Common myeloid progenitor, CD34-positive (primary cell): ENCODE measurements at regions of chr6 and their contacts with region 1.

Region 1: DNA sequence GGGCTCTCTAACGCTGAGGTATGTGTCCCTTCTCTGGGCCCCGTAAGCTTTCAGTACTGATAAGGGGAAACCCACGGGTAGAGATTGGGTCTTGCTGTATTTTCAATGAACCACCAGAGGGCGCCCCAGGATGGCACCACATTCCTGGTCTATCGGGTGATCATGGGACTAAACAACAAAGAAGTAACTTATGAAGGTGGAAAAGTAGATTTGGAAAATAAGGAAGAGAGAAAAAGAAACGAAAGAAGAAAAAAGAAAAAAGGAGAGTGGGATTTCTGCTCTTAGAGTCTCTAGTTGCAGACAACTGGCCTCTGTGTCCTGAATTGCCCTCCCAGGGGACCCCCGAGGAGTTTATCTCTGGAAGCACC is 93.8 kb downstream of the GMPR start:
- DNase-seq: peak; percentile 75 to 86 (median 82)
- H3K4me3 ChIP-seq: peak overlapping the region in 2 of 7 experiments; percentile 25 to 56
- H3K27ac ChIP-seq: no peak overlapping the region
- H3K4me1 ChIP-seq: peaks cover 2 to 13% (median 8%) of the 10 kb centered on the region in 4 experiments
- H3K27me3 ChIP-seq: no peaks in the 10 kb centered on the region

Region 2: GRCh38 chr6:16319813-16320532 is 12.2 kb before region 1 on chr6:
- CTCF ChIA-PET with region 1: interaction called, 46 read pairs
- POLR2A ChIA-PET with region 1: no interaction called
- DNase-seq: peak; percentile 76 to 95 (median 91)
- H3K4me3 ChIP-seq: peak overlapping the region in 6 of 7 experiments; percentile 31 to 74 (median 49)
- H3K27ac ChIP-seq: peak overlapping the region in 1 of 2 experiments; percentile 67
- H3K4me1 ChIP-seq: peaks cover 18 to 43% (median 35%) of the 10 kb centered on the region in 4 experiments
- H3K27me3 ChIP-seq: no peaks in the 10 kb centered on the region

Region 3: DNA sequence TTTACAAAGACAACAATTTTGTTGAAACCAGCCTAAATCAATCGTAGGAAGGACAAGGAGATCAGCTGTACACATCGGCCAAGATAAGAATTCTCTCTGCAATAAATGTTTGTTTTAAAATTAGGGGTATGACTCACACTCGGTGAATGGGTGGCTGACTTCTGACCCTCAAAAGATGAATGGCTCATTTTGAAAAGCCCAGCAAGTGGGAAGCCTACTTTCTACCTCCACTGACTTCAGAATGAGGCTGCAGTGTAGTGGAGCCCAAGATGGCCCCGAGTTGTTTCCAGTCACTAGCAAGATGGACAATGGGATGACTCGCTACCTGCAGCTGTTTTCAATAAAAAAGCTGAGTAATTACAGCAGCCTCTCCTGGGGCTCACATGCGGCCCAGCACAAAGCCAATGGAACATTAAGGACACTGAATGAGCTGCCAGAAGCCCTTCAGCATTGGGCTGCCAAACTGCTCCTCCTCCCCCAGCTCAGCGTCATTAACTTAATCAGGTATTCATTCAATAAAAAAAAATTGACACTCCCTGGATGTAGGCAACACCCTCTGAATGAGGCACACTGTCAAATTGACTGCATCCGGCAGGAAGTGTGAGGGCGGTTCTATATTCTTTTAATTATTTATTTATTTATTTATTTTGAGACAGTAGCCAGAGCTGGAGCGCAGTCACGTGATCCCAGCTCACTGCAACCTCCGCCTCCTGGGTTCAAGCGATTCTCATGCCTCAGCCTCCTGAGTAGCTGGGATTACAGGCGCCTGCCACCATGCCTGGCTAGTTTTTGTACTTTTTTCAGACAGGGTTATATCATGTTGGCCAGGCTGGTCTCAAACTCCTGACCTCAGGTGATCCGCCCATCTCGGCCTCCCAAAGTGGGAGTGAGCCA is 13.5 kb after region 1 on chr6:
- CTCF ChIA-PET with region 1: interaction called, 16 read pairs
- POLR2A ChIA-PET with region 1: no interaction called
- DNase-seq: no peak
- H3K4me3 ChIP-seq: no peak overlapping the region
- H3K27ac ChIP-seq: no peak overlapping the region
- H3K4me1 ChIP-seq: peaks cover 0 to 10% (median 4%) of the 10 kb centered on the region in 4 experiments
- H3K27me3 ChIP-seq: no peaks in the 10 kb centered on the region

Region 4: GRCh38 chr6:16403831-16404230 is 71.7 kb after region 1 on chr6:
- CTCF ChIA-PET with region 1: interaction called, 15 read pairs
- POLR2A ChIA-PET with region 1: no interaction called
- DNase-seq: no peak
- H3K4me3 ChIP-seq: no peak overlapping the region
- H3K27ac ChIP-seq: no peak overlapping the region
- H3K4me1 ChIP-seq: peaks cover 3 to 14% (median 6%) of the 10 kb centered on the region in 4 experiments
- H3K27me3 ChIP-seq: no peaks in the 10 kb centered on the region

Region 5: GRCh38 chr6:16409531-16410441 is 77.6 kb after region 1 on chr6:
- CTCF ChIA-PET with region 1: interaction called, 36 read pairs
- POLR2A ChIA-PET with region 1: no interaction called
- DNase-seq: peak; percentile 55 to 88 (median 86)
- H3K4me3 ChIP-seq: no peak overlapping the region
- H3K27ac ChIP-seq: no peak overlapping the region
- H3K4me1 ChIP-seq: peaks cover 0 to 12% (median 4%) of the 10 kb centered on the region in 4 experiments
- H3K27me3 ChIP-seq: no peaks in the 10 kb centered on the region

Region 6: DNA sequence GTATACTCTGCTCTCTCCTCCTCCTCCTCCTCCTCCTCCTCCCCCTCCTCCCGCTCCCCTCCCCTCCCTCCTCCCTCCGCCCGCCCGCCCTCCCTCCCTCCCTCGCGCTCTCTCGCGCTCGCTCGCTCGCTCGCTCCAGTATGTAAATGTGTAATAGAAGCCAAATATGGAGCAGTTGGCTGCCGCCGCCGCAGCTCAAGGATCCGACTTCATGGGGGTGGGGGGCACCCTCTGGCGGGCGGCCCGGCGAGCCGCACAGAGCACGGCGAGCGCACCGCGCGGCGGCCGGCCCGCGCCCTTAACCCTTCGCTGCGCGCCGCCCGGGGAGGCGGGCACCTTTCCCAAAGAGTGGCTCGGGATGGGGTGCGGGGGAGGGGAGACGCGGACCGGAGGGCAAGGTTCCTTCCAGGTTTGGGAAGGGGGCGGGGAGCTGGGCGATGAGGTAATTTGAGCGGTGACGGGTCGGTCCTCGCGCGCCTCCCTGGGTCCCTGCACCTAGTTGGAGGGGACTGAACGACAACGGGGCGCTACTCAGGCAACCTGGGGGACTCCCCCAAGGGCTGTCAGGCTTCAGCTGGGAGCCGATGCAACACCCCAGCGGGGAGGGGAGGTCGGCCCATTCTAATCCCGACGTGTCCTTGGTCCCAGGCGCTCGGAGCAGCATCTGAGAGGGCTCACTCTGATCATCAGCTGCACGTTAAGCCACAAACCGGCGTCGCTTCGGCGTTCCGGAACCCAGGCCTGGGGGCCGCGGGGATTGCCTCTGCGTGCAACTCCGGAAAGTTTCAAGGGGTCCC is 429.5 kb after region 1 on chr6:
- CTCF ChIA-PET with region 1: interaction called, 10 read pairs
- POLR2A ChIA-PET with region 1: no interaction called
- DNase-seq: peak; percentile 90 to 95 (median 93)
- H3K4me3 ChIP-seq: peak overlapping the region; percentile 63 to 96 (median 91)
- H3K27ac ChIP-seq: peak overlapping the region; percentile 46 to 79
- H3K4me1 ChIP-seq: peaks cover 0 to 31% (median 23%) of the 10 kb centered on the region in 4 experiments
- H3K27me3 ChIP-seq: no peaks in the 10 kb centered on the region